Naive thymus-derived CD4-positive, alpha-beta T cell (primary cell): ENCODE measurements at regions of chr2 and their contacts with region 1.

Region 1: DNA sequence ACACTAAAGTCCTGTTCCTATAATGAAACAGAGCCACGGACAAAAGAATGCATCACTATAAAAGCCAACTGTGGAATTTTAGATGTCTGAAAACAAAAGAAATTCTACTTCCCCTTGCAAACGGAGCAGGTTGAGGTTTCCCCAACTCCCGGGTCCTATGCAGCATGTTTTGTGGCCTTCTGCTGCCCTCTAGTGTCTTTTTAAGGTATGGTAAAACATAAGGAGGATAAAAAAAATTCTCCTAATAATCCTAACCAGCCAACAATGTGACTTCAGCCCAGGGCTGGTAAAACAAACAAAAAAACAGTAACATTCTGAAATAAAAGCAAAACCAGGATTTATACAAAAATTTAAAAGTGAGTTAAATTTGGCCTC is 539.5 kb downstream of the NRXN1 start:
- DNase-seq: peak in 5 of 9 donors; percentile 18 to 36 (median 30)
- ATAC-seq: peak; percentile 74
- H3K4me3 ChIP-seq: no peak overlapping the region
- H3K4me3 Mint-ChIP-seq: peak overlapping the region in 9 of 10 donors; percentile 3 to 57 (median 19)
- H3K27ac ChIP-seq: no peak overlapping the region
- H3K27ac Mint-ChIP-seq: peak overlapping the region in 1 of 9 donors; percentile 13
- H3K4me1 ChIP-seq: no peaks in the 10 kb centered on the region
- H3K4me1 Mint-ChIP-seq: peaks cover 0 to 20% (median 11%) of the 10 kb centered on the region in 7 donors
- H3K27me3 ChIP-seq: no peaks in the 10 kb centered on the region
- H3K27me3 Mint-ChIP-seq: no peaks in the 10 kb centered on the region

Region 2: DNA sequence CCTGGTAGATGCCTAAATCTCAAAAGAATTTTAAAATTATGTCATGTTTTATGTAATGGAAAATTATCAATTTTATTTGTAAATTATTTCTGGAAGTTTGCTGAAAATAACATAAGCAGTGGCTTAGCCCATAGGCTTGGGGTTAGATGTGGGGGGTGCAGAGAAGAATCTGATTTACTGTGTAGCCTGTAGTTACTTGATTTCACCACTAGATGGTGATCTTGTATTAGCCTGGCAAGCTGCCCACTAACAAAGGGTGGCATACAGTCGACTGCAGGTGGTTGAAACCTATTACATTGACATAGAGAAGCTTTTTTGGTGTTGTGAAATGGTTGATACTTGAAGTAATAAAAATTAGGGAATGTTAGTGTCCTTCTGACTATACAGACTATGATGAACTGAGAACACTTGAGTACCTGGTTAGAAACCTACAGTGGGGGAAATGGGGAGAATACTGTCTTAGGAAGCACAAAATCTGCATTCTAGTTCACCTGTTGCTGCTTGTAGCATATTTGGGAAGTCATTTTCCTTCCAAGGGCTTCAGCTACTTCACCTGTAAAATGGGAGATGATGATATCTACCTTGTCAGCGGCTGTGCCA is 1545.9 kb before region 1 on chr2:
- CTCF ChIA-PET with region 1: no interaction called
- POLR2A ChIA-PET with region 1: no interaction called
- intact Hi-C with region 1: loop called in 1 of 2 experiments (anchors 1 kb)
- DNase-seq: peak in 7 of 9 donors; percentile 16 to 49 (median 41)
- ATAC-seq: peak; percentile 86
- H3K4me3 ChIP-seq: no peak overlapping the region
- H3K4me3 Mint-ChIP-seq: no peak overlapping the region
- H3K27ac ChIP-seq: no peak overlapping the region
- H3K27ac Mint-ChIP-seq: no peak overlapping the region
- H3K4me1 ChIP-seq: no peaks in the 10 kb centered on the region
- H3K4me1 Mint-ChIP-seq: no peaks in the 10 kb centered on the region
- H3K27me3 ChIP-seq: no peaks in the 10 kb centered on the region
- H3K27me3 Mint-ChIP-seq: peaks cover 0 to 10% (median 0%) of the 10 kb centered on the region in 5 donors

Region 3: GRCh38 chr2:49687918-49688317 is 804.5 kb before region 1 on chr2:
- CTCF ChIA-PET with region 1: no interaction called
- POLR2A ChIA-PET with region 1: no interaction called
- intact Hi-C with region 1: loop called in 1 of 2 experiments (anchors 5 kb)
- DNase-seq: no peak
- ATAC-seq: no peak
- H3K4me3 ChIP-seq: no peak overlapping the region
- H3K4me3 Mint-ChIP-seq: no peak overlapping the region
- H3K27ac ChIP-seq: no peak overlapping the region
- H3K27ac Mint-ChIP-seq: no peak overlapping the region
- H3K4me1 ChIP-seq: no peaks in the 10 kb centered on the region
- H3K4me1 Mint-ChIP-seq: no peaks in the 10 kb centered on the region
- H3K27me3 ChIP-seq: no peaks in the 10 kb centered on the region
- H3K27me3 Mint-ChIP-seq: peaks cover 0 to 3% (median 0%) of the 10 kb centered on the region in 5 donors